ENCODE measurements at regions of chr13 and their contacts with region 1.

Region 1: GRCh38 chr13:50713523-50714248 is 129.8 kb downstream of the DLEU7 start:
- DNase-seq: peak; percentile 11
- H3K4me3 Mint-ChIP-seq: peak overlapping the region; percentile 37
- H3K27ac Mint-ChIP-seq: no peak overlapping the region
- H3K4me1 Mint-ChIP-seq: peaks cover 16% of the 10 kb centered on the region
- H3K27me3 Mint-ChIP-seq: peaks cover 50% of the 10 kb centered on the region

Region 2: DNA sequence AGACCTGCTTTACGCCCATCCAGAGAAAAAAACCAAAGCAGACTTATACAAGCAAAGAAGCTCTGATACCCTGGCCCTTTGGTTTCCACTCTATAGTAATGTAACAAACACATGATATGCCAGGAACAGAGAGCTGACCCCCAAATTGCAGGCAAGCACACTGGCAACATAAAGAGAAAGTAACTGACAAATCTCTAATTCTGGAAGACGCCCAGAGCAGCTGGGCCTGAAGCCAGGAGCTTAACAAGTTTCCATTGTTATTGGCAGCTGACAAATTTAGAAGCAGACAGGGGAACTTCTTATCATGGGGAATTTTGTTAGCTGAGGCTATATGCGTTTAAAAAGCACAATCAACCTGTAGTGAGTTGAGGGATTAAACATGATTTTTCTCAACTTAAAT is 28.2 kb before region 1 on chr13:
- intact Hi-C with region 1: loop called (anchors 2 kb)
- DNase-seq: no peak
- H3K4me3 Mint-ChIP-seq: no peak overlapping the region
- H3K27ac Mint-ChIP-seq: no peak overlapping the region
- H3K4me1 Mint-ChIP-seq: peaks cover 16% of the 10 kb centered on the region
- H3K27me3 Mint-ChIP-seq: peaks cover 58% of the 10 kb centered on the region

Region 3: GRCh38 chr13:50693727-50694126 is 20.0 kb before region 1 on chr13:
- intact Hi-C with region 1: loop called (anchors 1 kb)
- DNase-seq: no peak
- H3K4me3 Mint-ChIP-seq: no peak overlapping the region
- H3K27ac Mint-ChIP-seq: no peak overlapping the region
- H3K4me1 Mint-ChIP-seq: peaks cover 3% of the 10 kb centered on the region
- H3K27me3 Mint-ChIP-seq: peaks cover 65% of the 10 kb centered on the region

Region 4: GRCh38 chr13:51034906-51035305 is 321.2 kb after region 1 on chr13:
- intact Hi-C with region 1: loop called (anchors 10 kb)
- DNase-seq: no peak
- H3K4me3 Mint-ChIP-seq: no peak overlapping the region
- H3K27ac Mint-ChIP-seq: no peak overlapping the region
- H3K4me1 Mint-ChIP-seq: peaks cover 6% of the 10 kb centered on the region
- H3K27me3 Mint-ChIP-seq: peaks cover 21% of the 10 kb centered on the region

Measured in activated T-helper 2 cell treated with anti-CD3 and anti-CD28 coated beads, Interferon-gamma antibody, Interleukin-2, Interleukin-4, amounts not matched to agents 10 μg/mL and 5 μg/mL and 100 μg/mL, durations not matched to agents 14 hours and 24 hours and 36 hours (primary cell).